GM10248 (cell line): ENCODE measurements at regions of chr1 and their contacts with region 1.

Region 1: DNA sequence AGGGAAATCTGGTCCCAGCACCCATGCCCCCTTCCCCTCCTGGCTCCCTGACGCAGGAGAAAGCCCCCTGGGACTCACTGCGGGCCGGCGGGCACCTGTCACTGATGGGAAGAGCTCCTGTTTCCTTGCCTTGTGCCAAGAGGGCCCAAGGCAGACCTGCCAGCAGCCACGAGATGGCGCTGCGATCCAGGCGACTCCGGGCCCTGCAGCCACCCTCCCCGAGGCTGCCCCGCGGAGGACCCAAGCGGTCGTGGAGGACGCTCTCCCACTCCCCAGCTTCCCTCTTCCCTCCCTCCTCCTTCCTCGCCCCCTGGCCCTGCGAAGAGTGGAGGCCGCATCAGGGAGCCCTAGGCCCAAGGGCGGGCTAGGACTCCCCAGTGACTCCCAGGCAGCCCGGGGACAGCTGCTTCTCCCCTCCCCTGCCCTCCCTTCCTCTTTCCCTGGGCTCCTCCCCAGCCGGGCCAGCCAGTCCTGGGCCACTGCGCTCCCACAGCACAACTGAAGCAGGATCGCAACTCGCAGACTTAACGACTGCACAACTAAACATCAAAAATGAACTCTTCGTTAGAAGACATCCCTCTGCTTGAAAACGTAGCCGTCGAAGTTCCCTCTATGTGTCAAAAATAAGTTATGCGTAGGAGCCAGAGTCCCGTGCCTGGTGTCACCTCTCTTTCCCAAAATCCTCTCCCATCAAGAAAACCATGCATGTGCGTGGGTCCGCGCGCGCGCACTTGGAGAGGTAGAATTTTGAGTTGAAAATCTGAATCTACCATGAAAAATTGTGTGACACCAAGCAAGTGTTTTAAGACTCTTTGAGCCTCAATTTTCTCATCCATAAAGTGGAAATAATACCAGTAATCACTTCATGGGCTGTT is 34.2 kb downstream of the BATF3 start:
- DNase-seq: peak; percentile 88
- CTCF ChIP-seq: peak; percentile 99

Region 2: DNA sequence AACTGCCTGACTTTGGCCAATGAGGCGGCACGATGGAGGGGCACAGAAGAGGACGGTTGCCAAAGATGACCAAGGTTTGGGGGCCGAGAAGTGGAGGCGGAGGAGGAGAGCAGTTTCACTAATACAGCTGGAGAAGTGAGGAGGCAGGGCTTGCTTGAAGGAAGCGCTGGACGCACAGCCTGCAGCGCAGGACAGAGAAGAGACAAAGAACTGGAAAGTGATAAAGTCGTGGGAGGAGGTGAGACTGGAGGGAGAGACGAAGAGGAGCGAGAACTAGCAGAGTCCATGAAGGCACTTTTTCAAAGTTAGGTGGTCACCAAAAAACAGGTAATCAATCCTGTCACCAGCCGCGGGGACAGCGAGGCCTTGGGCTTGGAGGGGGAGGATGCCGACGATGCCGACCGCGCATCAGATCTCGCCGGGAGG is 251.6 kb before region 1 on chr1:
- CTCF ChIA-PET with region 1: no interaction called
- POLR2A ChIA-PET with region 1: no interaction called
- DNase-seq: peak; percentile 46
- CTCF ChIP-seq: no peak

Region 3: DNA sequence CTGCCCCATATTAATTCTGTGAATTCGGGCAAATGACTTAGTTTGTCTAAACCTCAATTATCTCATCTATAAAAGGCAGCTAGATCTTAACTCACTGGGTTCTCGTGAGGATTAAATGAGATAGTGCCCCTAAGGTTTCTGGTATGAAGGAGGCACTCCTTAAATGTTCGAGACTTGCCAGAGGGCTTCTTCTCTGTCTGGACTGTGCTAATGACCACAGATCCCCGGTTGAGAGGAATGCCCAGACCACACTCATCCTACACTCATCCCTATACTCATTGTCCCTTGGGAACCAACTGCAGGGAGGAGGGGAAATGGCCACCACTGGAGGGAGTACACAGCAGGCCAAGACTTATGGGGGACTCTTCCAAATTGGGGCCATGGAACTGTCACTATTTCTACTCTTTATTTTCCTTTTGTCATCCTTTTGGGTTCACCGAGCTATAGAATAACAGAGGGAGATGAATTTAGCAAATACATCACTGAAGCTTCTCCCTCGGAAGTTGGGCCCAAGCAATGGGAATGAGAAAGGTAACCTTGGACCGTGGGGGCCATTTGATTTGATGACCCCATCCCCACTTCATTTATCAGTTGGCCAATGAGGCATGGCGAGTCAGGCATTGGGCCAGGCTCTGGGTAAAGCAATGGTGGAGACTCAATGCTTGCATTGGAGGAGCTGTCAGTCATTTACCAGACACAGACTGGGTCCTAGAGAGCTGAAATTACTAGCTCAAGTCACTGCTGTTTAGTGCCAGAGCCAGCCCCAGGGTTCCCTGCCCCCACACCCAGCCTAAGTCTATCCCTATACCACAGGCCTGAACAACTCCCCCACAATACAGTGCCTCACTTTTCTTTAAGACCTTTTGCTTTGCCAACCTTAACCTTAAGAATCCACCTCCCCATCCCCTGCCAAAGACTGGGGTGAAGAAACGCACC is 51.8 kb before region 1 on chr1:
- CTCF ChIA-PET with region 1: interaction called, 21 read pairs
- POLR2A ChIA-PET with region 1: interaction called, 6 read pairs
- DNase-seq: no peak
- CTCF ChIP-seq: no peak

Region 4: GRCh38 chr1:212645546-212646543 is 19.6 kb before region 1 on chr1:
- CTCF ChIA-PET with region 1: interaction called, 45 read pairs
- POLR2A ChIA-PET with region 1: no interaction called
- DNase-seq: no peak
- CTCF ChIP-seq: no peak

Region 5: GRCh38 chr1:212749821-212750535 is 84.5 kb after region 1 on chr1:
- CTCF ChIA-PET with region 1: interaction called, 16 read pairs
- POLR2A ChIA-PET with region 1: no interaction called
- DNase-seq: peak; percentile 35
- CTCF ChIP-seq: peak; percentile 46

Region 6: DNA sequence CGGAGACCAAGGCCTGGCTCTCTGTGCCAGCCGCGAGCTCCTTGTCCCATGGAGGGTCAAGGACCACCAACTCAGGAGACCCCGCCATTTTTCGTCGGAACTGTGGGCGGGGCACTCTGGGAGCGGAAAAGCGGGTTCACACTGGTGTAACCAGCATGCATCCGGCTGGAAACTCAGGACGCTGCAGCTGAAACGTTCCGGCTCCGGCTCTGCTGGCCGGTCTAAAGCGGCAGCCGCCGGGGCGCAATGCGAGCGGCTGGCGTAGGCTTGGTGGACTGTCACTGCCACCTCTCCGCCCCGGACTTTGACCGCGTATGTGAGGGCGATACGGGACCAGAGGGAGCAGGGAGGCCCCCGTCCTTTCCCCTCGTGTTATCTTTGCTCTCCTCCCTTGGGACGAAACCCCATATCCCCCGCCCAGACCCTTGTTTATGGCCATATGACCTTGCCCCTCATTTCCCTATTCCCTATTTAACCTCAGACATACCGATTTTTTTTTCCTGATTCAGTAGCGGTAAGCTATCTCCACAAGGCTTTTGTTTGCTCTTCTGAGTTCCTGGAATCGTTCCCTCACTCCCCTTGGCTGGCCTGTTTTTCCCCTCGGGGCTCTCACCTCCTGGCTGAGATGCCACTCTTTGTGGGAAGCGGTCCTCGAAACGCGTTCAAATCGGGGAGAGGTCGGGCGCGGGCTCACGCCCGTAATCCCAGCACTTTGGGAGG is 126.4 kb after region 1 on chr1 and contains the starts of genes NSL1 and TATDN3:
- CTCF ChIA-PET with region 1: interaction called, 36 read pairs
- POLR2A ChIA-PET with region 1: no interaction called
- DNase-seq: peak; percentile 84
- CTCF ChIP-seq: no peak